Activated T-helper 1 cell treated with anti-CD3 and anti-CD28 coated beads, Interleukin-12 subunit alpha, Interleukin-12 subunit beta, Interleukin-2, Interleukin-4 antibody, amounts not matched to agents 30 ng/mL and 10 ng/mL and 1 ng/mL, durations not matched to agents 14 hours and 24 hours and 36 hours (primary cell): ENCODE measurements at regions of chrX and their contacts with region 1.

Region 1: DNA sequence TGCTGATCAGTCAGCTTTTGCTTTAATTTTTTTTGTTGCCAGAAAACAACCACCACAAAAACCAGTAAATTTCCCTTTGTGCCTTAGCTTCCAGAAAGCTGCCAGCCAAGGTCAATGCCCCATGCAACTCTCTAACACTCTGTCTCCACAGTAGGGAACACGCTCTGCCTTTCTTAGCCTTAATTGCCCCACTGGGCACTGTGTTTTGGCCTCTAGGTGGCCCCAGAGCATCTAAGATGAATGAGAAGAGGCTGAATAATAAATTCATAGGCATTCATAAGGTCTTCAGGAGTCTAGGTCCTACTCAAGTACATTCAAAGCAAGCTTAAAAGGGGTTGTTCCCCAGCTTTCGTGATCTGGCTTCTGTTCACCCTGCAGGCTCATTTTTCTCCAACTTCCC is 57.7 kb upstream of the PASD1 start:
- DNase-seq: no peak
- H3K4me3 Mint-ChIP-seq: no peak overlapping the region
- H3K27ac Mint-ChIP-seq: no peak overlapping the region
- H3K4me1 Mint-ChIP-seq: no peaks in the 10 kb centered on the region
- H3K27me3 Mint-ChIP-seq: no peaks in the 10 kb centered on the region

Region 2: GRCh38 chrX:151680805-151681204 is 175.0 kb after region 1 on chrX:
- intact Hi-C with region 1: loop called (anchors 2 kb)
- DNase-seq: peak; percentile 13
- H3K4me3 Mint-ChIP-seq: no peak overlapping the region
- H3K27ac Mint-ChIP-seq: no peak overlapping the region
- H3K4me1 Mint-ChIP-seq: no peaks in the 10 kb centered on the region
- H3K27me3 Mint-ChIP-seq: peaks cover 6% of the 10 kb centered on the region